ENCODE measurements at regions of chr9 and their contacts with region 1.

Region 1: GRCh38 chr9:78213712-78214111 is 22.2 kb upstream of the CEP78 start:
- DNase-seq: peak in 6 of 9 donors; percentile 12 to 54 (median 40)
- ATAC-seq: peak; percentile 65
- H3K4me3 ChIP-seq: no peak overlapping the region
- H3K4me3 Mint-ChIP-seq: peak overlapping the region in 3 of 10 donors; percentile 16 to 61 (median 46)
- H3K27ac ChIP-seq: no peak overlapping the region
- H3K27ac Mint-ChIP-seq: peak overlapping the region in 4 of 9 donors; percentile 30 to 89 (median 74)
- H3K4me1 ChIP-seq: peaks cover 34 to 38% of the 10 kb centered on the region in 2 donors
- H3K4me1 Mint-ChIP-seq: peaks cover 17 to 51% (median 44%) of the 10 kb centered on the region in 7 donors
- H3K27me3 ChIP-seq: no peaks in the 10 kb centered on the region
- H3K27me3 Mint-ChIP-seq: peaks cover 0 to under 1% (median 0%) of the 10 kb centered on the region in 5 donors

Region 2: DNA sequence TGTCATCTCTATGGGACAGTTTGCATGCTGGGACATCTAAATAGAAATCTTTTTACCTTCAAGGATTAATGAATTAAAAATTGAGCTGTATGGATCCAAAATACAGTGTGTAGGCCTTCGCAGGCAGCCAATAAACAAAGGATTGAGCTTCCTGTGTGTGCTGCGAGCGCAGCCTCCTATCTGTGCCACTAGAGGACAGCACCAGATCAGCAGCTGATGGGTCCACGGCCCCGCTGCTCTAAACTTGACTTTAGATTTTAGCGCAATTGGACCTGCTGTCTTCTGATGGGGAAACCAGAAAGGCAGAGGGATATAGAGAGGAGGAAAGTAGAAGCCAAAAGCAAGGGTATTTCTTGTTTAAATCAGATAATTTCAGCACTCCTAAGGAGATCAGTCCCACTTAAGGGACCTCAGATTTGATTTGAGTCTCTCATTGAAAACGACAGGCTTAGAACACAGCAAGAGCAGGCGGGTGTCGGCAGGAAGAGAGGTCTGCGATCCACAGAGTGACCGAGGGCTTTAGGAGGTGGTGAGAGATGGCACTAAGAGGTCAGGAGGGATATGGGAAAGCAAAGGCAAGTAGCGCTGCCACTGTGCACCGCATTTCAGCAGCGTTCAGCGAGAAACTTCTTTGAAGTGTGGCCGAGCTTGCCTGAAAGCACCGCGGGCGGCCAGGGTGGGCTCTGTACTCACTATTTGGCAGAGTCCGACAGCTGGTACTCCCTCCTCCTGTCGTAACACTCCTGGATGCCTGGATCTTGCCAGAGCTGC is 779.9 kb before region 1 on chr9:
- CTCF ChIA-PET with region 1: no interaction called
- POLR2A ChIA-PET with region 1: no interaction called
- intact Hi-C with region 1: loop called in 1 of 2 experiments (anchors 1 kb)
- DNase-seq: peak; percentile 24 to 62 (median 46)
- ATAC-seq: peak; percentile 90
- H3K4me3 ChIP-seq: no peak overlapping the region
- H3K4me3 Mint-ChIP-seq: peak overlapping the region in 3 of 10 donors; percentile 9 to 70 (median 29)
- H3K27ac ChIP-seq: no peak overlapping the region
- H3K27ac Mint-ChIP-seq: no peak overlapping the region
- H3K4me1 ChIP-seq: no peaks in the 10 kb centered on the region
- H3K4me1 Mint-ChIP-seq: peaks cover 4 to 6% (median 4%) of the 10 kb centered on the region in 7 donors
- H3K27me3 ChIP-seq: no peaks in the 10 kb centered on the region
- H3K27me3 Mint-ChIP-seq: peaks cover 0 to 8% (median 0%) of the 10 kb centered on the region in 5 donors

Region 3: GRCh38 chr9:77841739-77842386 is 371.8 kb before region 1 on chr9:
- CTCF ChIA-PET with region 1: interaction called, 7 read pairs
- POLR2A ChIA-PET with region 1: interaction called, 7 read pairs
- intact Hi-C with region 1: loop called (anchors 1 to 5 kb)
- DNase-seq: peak in 5 of 9 donors; percentile 4 to 39 (median 17)
- ATAC-seq: peak; percentile 24
- H3K4me3 ChIP-seq: no peak overlapping the region
- H3K4me3 Mint-ChIP-seq: no peak overlapping the region
- H3K27ac ChIP-seq: no peak overlapping the region
- H3K27ac Mint-ChIP-seq: peak overlapping the region in 3 of 9 donors; percentile 17 to 32 (median 19)
- H3K4me1 ChIP-seq: no peaks in the 10 kb centered on the region
- H3K4me1 Mint-ChIP-seq: peaks cover 7 to 25% (median 13%) of the 10 kb centered on the region in 7 donors
- H3K27me3 ChIP-seq: no peaks in the 10 kb centered on the region
- H3K27me3 Mint-ChIP-seq: no peaks in the 10 kb centered on the region

Region 4: GRCh38 chr9:77977210-77977611 is 236.5 kb before region 1 on chr9:
- CTCF ChIA-PET with region 1: interaction called, 17 read pairs
- POLR2A ChIA-PET with region 1: interaction called, 4 read pairs
- intact Hi-C with region 1: loop called (anchors 1 kb)
- DNase-seq: peak; percentile 12 to 58 (median 47)
- ATAC-seq: peak; percentile 78
- H3K4me3 ChIP-seq: peak overlapping the region; percentile 2
- H3K4me3 Mint-ChIP-seq: peak overlapping the region in 9 of 10 donors; percentile 29 to 77 (median 60)
- H3K27ac ChIP-seq: peak overlapping the region; percentile 20
- H3K27ac Mint-ChIP-seq: peak overlapping the region; percentile 57 to 87 (median 78)
- H3K4me1 ChIP-seq: peaks cover 23 to 45% of the 10 kb centered on the region in 2 donors
- H3K4me1 Mint-ChIP-seq: peaks cover 41 to 76% (median 62%) of the 10 kb centered on the region in 7 donors
- H3K27me3 ChIP-seq: no peaks in the 10 kb centered on the region
- H3K27me3 Mint-ChIP-seq: no peaks in the 10 kb centered on the region

Region 5: DNA sequence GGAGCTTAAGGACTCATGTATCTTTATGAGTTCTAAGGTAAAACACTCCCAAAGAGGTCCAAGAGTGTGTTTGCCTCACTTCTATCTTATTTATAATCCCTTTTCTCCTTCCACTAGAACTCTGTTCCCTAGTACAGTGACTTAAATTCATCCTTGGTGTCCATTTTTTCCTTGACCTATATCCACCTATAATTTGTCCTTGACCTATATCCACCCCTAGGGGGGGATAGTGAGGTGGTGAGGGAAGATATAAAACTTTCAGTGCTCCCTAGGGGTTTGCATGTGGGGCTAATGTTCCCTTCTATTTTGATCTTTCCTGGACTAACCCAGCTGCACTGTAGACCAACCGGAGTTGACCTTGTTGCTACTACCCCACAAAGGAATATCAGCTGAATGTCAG is 98.6 kb before region 1 on chr9:
- CTCF ChIA-PET with region 1: interaction called, 12 read pairs
- POLR2A ChIA-PET with region 1: no interaction called
- intact Hi-C with region 1: loop called (anchors 1 to 5 kb)
- DNase-seq: peak in 2 of 9 donors; percentile 11 to 18
- ATAC-seq: peak; percentile 43
- H3K4me3 ChIP-seq: no peak overlapping the region
- H3K4me3 Mint-ChIP-seq: no peak overlapping the region
- H3K27ac ChIP-seq: no peak overlapping the region
- H3K27ac Mint-ChIP-seq: no peak overlapping the region
- H3K4me1 ChIP-seq: peaks cover 17 to 21% of the 10 kb centered on the region in 2 donors
- H3K4me1 Mint-ChIP-seq: peaks cover 33 to 63% (median 41%) of the 10 kb centered on the region in 7 donors
- H3K27me3 ChIP-seq: no peaks in the 10 kb centered on the region
- H3K27me3 Mint-ChIP-seq: no peaks in the 10 kb centered on the region

Region 6: DNA sequence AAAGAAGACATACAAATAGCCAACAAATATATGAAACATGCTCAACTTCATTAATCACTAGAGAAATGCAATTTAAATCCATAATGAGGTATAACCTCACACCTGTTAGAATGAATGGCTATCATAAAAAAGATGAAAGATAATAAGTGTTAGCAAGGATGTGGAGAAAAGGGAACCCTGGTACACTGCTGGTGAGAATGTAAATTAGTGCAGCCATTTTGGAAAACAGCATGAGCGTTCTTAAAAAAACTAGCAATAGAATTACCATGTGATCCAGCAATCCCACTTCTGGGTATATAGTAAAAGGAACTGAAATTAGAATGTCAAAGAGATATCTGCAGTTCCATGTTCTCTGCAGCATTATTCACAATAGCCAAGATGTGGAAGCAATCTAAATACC is 42.1 kb before region 1 on chr9:
- CTCF ChIA-PET with region 1: no interaction called
- POLR2A ChIA-PET with region 1: interaction called, 3 read pairs
- intact Hi-C with region 1: loop called in 1 of 2 experiments (anchors 5 kb)
- DNase-seq: no peak
- ATAC-seq: no peak
- H3K4me3 ChIP-seq: no peak overlapping the region
- H3K4me3 Mint-ChIP-seq: no peak overlapping the region
- H3K27ac ChIP-seq: no peak overlapping the region
- H3K27ac Mint-ChIP-seq: no peak overlapping the region
- H3K4me1 ChIP-seq: no peaks in the 10 kb centered on the region
- H3K4me1 Mint-ChIP-seq: no peaks in the 10 kb centered on the region
- H3K27me3 ChIP-seq: no peaks in the 10 kb centered on the region
- H3K27me3 Mint-ChIP-seq: peaks cover 0 to 36% (median 0%) of the 10 kb centered on the region in 5 donors

Region 7: GRCh38 chr9:78357165-78357873 is 143.6 kb after region 1 on chr9:
- CTCF ChIA-PET with region 1: no interaction called
- POLR2A ChIA-PET with region 1: no interaction called
- intact Hi-C with region 1: no loop called
- DNase-seq: no peak
- ATAC-seq: no peak
- H3K4me3 ChIP-seq: no peak overlapping the region
- H3K4me3 Mint-ChIP-seq: no peak overlapping the region
- H3K27ac ChIP-seq: no peak overlapping the region
- H3K27ac Mint-ChIP-seq: no peak overlapping the region
- H3K4me1 ChIP-seq: no peaks in the 10 kb centered on the region
- H3K4me1 Mint-ChIP-seq: peaks cover 0 to 10% (median 2%) of the 10 kb centered on the region in 7 donors
- H3K27me3 ChIP-seq: no peaks in the 10 kb centered on the region
- H3K27me3 Mint-ChIP-seq: no peaks in the 10 kb centered on the region

Measured in naive thymus-derived CD4-positive, alpha-beta T cell (primary cell).